ENCODE measurements at regions of chr11 and their contacts with region 1.

Region 1: GRCh38 chr11:19553683-19554333 is 158.8 kb upstream of the NAV2 start:
- DNase-seq: peak; percentile 65
- H3K4me3 ChIP-seq: no peak overlapping the region
- H3K27ac ChIP-seq: no peak overlapping the region
- H3K4me1 ChIP-seq: no peaks in the 10 kb centered on the region
- H3K27me3 ChIP-seq: no peaks in the 10 kb centered on the region
- CTCF ChIP-seq: peak; percentile 79 to 81
- POLR2A ChIP-seq: no peak

Region 2: DNA sequence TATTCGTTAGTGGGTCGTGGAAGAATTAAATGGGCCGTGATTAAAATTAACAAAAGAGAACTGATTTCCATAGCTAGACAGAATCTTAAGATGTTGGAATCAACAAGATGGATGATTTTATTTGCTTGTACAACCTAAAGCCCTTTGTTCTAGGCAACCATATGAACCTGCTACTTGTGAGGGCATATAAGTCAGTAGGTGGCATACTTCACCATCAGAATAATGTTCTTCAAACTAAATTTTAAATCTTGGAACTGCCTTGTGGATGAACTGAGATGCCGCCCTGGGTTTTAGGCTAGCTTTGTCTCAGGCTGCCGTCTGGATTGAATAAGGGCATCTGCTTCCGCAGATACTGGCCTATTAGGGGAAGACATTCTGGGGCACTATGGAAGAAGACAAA is 393.0 kb before region 1 on chr11:
- CTCF ChIA-PET with region 1: no interaction called
- POLR2A ChIA-PET with region 1: no interaction called
- dilution Hi-C with region 1: no loop called
- intact Hi-C with region 1: loop called (anchors 10 kb)
- DNase-seq: peak; percentile 16
- H3K4me3 ChIP-seq: no peak overlapping the region
- H3K27ac ChIP-seq: no peak overlapping the region
- H3K4me1 ChIP-seq: no peaks in the 10 kb centered on the region
- H3K27me3 ChIP-seq: no peaks in the 10 kb centered on the region
- CTCF ChIP-seq: no peak
- POLR2A ChIP-seq: no peak

Region 3: GRCh38 chr11:19311308-19312030 is 242.3 kb before region 1 on chr11:
- CTCF ChIA-PET with region 1: interaction called, 10 read pairs
- POLR2A ChIA-PET with region 1: no interaction called
- dilution Hi-C with region 1: no loop called
- intact Hi-C with region 1: loop called (anchors 1 kb)
- DNase-seq: peak; percentile 62
- H3K4me3 ChIP-seq: no peak overlapping the region
- H3K27ac ChIP-seq: no peak overlapping the region
- H3K4me1 ChIP-seq: no peaks in the 10 kb centered on the region
- H3K27me3 ChIP-seq: peaks cover 8 to 14% of the 10 kb centered on the region in 2 experiments
- CTCF ChIP-seq: peak; percentile 90 to 97
- POLR2A ChIP-seq: no peak

Region 4: GRCh38 chr11:19344751-19345518 is 208.9 kb before region 1 on chr11:
- CTCF ChIA-PET with region 1: interaction called, 9 read pairs
- POLR2A ChIA-PET with region 1: no interaction called
- dilution Hi-C with region 1: no loop called
- intact Hi-C with region 1: loop called (anchors 1 kb)
- DNase-seq: peak; percentile 43
- H3K4me3 ChIP-seq: peak overlapping the region in 2 of 3 experiments; percentile 32 to 58
- H3K27ac ChIP-seq: no peak overlapping the region
- H3K4me1 ChIP-seq: peaks cover 12% of the 10 kb centered on the region
- H3K27me3 ChIP-seq: peaks cover 23 to 36% of the 10 kb centered on the region in 2 experiments
- CTCF ChIP-seq: no peak
- POLR2A ChIP-seq: no peak

Region 5: GRCh38 chr11:19664896-19665548 is 111.2 kb after region 1 on chr11:
- CTCF ChIA-PET with region 1: no interaction called
- POLR2A ChIA-PET with region 1: no interaction called
- dilution Hi-C with region 1: no loop called
- intact Hi-C with region 1: no loop called
- DNase-seq: no peak
- H3K4me3 ChIP-seq: no peak overlapping the region
- H3K27ac ChIP-seq: no peak overlapping the region
- H3K4me1 ChIP-seq: peaks cover 13% of the 10 kb centered on the region
- H3K27me3 ChIP-seq: no peaks in the 10 kb centered on the region
- CTCF ChIP-seq: no peak
- POLR2A ChIP-seq: no peak

Region 6: DNA sequence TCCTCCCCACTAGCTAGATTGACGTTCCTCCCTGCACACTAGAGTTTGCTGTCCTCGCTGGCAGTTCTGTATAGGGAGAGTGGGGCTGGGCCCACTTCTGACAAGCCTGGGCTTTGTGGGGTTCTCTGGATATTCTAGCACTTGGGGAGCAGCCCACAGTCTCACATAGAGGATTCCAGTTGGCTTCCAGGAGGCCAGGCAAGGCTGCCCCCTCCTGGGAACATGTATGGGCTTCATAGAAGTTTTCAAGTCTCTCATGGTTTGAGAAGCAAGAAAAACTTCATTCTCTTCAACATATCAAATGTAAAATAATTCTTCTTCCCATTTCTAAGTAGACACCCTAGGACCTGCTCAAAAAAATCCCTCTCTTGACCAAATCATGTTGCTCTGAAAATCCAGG is 246.4 kb after region 1 on chr11:
- CTCF ChIA-PET with region 1: interaction called, 6 read pairs
- POLR2A ChIA-PET with region 1: no interaction called
- dilution Hi-C with region 1: no loop called
- intact Hi-C with region 1: loop called (anchors 2 kb)
- DNase-seq: peak; percentile 36
- H3K4me3 ChIP-seq: no peak overlapping the region
- H3K27ac ChIP-seq: no peak overlapping the region
- H3K4me1 ChIP-seq: no peaks in the 10 kb centered on the region
- H3K27me3 ChIP-seq: no peaks in the 10 kb centered on the region
- CTCF ChIP-seq: peak; percentile 14 to 47
- POLR2A ChIP-seq: no peak